RWPE1 (cell line): ENCODE measurements at regions of chr15 and their contacts with region 1.

Region 1: DNA sequence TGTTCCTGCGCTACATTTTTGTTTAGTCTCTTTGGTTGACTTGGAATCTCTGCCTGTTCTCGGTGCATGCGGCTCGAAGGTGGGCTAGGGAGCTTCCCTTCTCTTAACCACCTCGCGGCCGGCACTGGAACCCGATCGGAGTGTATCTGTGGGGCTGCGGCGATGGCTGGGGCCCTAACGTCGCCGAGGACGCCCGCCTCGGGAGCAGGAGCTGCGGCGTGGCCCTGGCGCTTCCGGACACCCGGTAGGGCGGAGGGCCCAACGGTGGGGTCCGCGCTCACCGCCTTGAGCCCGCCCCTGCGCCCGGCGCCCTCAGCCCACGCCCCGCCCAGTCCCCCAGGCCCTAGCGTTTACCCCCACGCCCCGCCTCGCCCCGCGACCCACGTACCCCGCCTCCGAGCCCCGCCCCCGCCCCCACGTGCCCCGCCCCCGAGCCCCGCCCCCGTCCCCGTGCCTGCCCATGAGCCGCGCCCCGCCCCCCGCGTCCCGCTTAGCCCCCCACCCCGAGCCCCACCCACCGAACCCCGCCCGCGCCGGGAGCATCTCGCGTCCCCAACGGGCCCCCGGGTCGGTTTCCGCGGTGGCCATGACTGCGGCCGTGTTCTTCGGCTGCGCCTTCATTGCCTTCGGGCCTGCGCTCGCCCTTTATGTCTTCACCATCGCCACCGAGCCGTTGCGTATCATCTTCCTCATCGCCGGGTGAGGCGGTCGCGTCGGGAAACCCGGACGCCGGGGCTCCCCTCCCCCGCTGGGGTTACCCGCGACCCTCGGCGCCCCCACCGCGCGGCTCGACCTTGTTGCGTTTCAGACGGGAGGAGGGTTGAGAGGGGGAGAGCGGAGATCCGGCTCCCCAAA is at the start of gene APH1B:
- DNase-seq: peak; percentile 54
- H3K27ac ChIP-seq: peak within 1 kb of the TSS; percentile 68
- CTCF ChIP-seq: no peak

Region 2: GRCh38 chr15:63312286-63312685 is 35.0 kb after region 1 on chr15:
- CTCF ChIA-PET with region 1: interaction called, 10 read pairs
- POLR2A ChIA-PET with region 1: no interaction called
- DNase-seq: no peak
- H3K27ac ChIP-seq: no peak overlapping the region
- CTCF ChIP-seq: no peak

Region 3: GRCh38 chr15:64092075-64092820 is 815.0 kb after region 1 on chr15:
- CTCF ChIA-PET with region 1: no interaction called
- POLR2A ChIA-PET with region 1: interaction called, 11 read pairs
- DNase-seq: no peak
- H3K27ac ChIP-seq: no peak overlapping the region
- CTCF ChIP-seq: no peak

Region 4: GRCh38 chr15:64162870-64163658 is 885.8 kb after region 1 on chr15 and contains the start of gene PPIB:
- CTCF ChIA-PET with region 1: no interaction called
- POLR2A ChIA-PET with region 1: no interaction called
- DNase-seq: peak; percentile 98
- H3K27ac ChIP-seq: peak within 1 kb of the TSS; percentile 84
- CTCF ChIP-seq: peak; percentile 87